ENCODE measurements at regions of chr1 and their contacts with region 1.

Region 1: GRCh38 chr1:9004700-9005394 is 21.4 kb downstream of the SLC2A7 start:
- DNase-seq: no peak
- ATAC-seq: peak; percentile 73
- H3K4me3 ChIP-seq: no peak overlapping the region
- H3K27ac ChIP-seq: no peak overlapping the region
- H3K4me1 ChIP-seq: peaks cover 22% of the 10 kb centered on the region
- H3K27me3 ChIP-seq: no peaks in the 10 kb centered on the region
- CTCF ChIP-seq: peak; percentile 89 to 97 (median 97)
- EP300 ChIP-seq: no peak
- POLR2A ChIP-seq: no peak
- RAD21 ChIP-seq: peak; percentile 82

Region 2: GRCh38 chr1:8817406-8818324 is 187.2 kb before region 1 on chr1 and contains the start of gene RERE:
- CTCF ChIA-PET with region 1: no interaction called
- POLR2A ChIA-PET with region 1: no interaction called
- RAD21 ChIA-PET with region 1: no interaction called
- SMC1A ChIA-PET with region 1: no interaction called
- in situ Hi-C with region 1: no loop called
- intact Hi-C with region 1: no loop called
- DNase-seq: peak; percentile 74
- ATAC-seq: peak; percentile 92
- H3K4me3 ChIP-seq: peak within 1 kb of the TSS; percentile 91
- H3K27ac ChIP-seq: peak within 1 kb of the TSS; percentile 95
- H3K4me1 ChIP-seq: no peaks in the 10 kb centered on the region
- H3K27me3 ChIP-seq: no peaks in the 10 kb centered on the region
- CTCF ChIP-seq: 0 out of 6 replicates have a peak, but pooled peaks of 1 of the 3 experiments have one; percentile 0
- EP300 ChIP-seq: no peak
- POLR2A ChIP-seq: peak; percentile 92
- RAD21 ChIP-seq: no peak
- polyA plus RNA-seq, gene RERE: 5.2 to 5.9 TPM

Region 3: GRCh38 chr1:8910914-8911313 is 93.9 kb before region 1 on chr1:
- CTCF ChIA-PET with region 1: interaction called, 22 read pairs
- POLR2A ChIA-PET with region 1: interaction called, 3 read pairs
- RAD21 ChIA-PET with region 1: interaction called, 4 read pairs
- SMC1A ChIA-PET with region 1: interaction called, 10 read pairs
- in situ Hi-C with region 1: no loop called
- intact Hi-C with region 1: loop called (anchors 5 kb)
- DNase-seq: no peak
- ATAC-seq: no peak
- H3K4me3 ChIP-seq: no peak overlapping the region
- H3K27ac ChIP-seq: no peak overlapping the region
- H3K4me1 ChIP-seq: no peaks in the 10 kb centered on the region
- H3K27me3 ChIP-seq: peaks cover 0 to 3% of the 10 kb centered on the region in 2 experiments; a peak in 3 of 4 replicates
- CTCF ChIP-seq: no peak
- EP300 ChIP-seq: no peak
- POLR2A ChIP-seq: no peak
- RAD21 ChIP-seq: no peak

Region 4: DNA sequence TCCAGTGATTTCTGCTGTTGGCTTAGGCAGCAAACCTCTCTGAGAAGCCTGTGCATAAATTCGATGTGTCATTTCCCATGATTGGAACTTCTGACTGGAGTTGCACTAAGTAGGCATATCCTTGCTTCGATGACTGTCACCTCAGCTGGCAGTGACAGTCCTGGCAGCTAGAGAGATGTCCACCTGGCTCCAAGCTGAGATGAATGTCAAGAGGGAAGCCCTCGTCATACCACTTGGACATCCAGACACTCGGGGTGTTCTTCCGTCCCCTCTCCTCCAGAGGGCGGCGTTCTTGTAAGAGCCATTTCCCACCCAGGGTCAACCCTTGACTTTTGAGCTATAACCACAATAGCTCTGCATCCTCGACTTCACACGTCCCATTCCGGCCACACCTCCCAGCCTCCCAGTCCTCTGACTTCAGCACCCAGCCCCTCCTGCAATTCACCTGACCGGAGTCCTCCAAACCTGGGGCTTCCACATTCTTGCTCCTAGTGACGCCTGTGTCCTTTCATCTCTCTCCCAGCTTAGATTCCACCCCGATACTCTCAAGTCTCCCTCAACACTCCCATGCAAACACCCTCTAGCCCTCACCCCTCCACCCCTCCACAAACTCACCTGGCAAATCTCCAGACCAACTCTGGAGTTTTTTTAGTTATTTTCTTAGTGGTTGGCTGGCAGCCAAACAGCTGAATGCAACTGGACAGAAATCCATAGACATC is 41.9 kb before region 1 on chr1:
- CTCF ChIA-PET with region 1: interaction called, 20 read pairs
- POLR2A ChIA-PET with region 1: no interaction called
- RAD21 ChIA-PET with region 1: interaction called, 17 read pairs
- SMC1A ChIA-PET with region 1: interaction called, 7 read pairs
- in situ Hi-C with region 1: no loop called
- intact Hi-C with region 1: no loop called
- DNase-seq: no peak
- ATAC-seq: peak; percentile 90
- H3K4me3 ChIP-seq: no peak overlapping the region
- H3K27ac ChIP-seq: no peak overlapping the region
- H3K4me1 ChIP-seq: no peaks in the 10 kb centered on the region; the same call in 1 of the 2 replicates
- H3K27me3 ChIP-seq: no peaks in the 10 kb centered on the region; a peak in 1 of 4 replicates
- CTCF ChIP-seq: peak; percentile 59 to 79 (median 66)
- EP300 ChIP-seq: no peak
- POLR2A ChIP-seq: no peak
- RAD21 ChIP-seq: peak; percentile 44

Region 5: GRCh38 chr1:8992936-8993687 is 11.7 kb before region 1 on chr1:
- CTCF ChIA-PET with region 1: interaction called, 37 read pairs
- POLR2A ChIA-PET with region 1: no interaction called
- RAD21 ChIA-PET with region 1: interaction called, 10 read pairs
- SMC1A ChIA-PET with region 1: interaction called, 17 read pairs
- in situ Hi-C with region 1: no loop called
- intact Hi-C with region 1: no loop called
- DNase-seq: no peak
- ATAC-seq: no peak
- H3K4me3 ChIP-seq: no peak overlapping the region
- H3K27ac ChIP-seq: no peak overlapping the region
- H3K4me1 ChIP-seq: no peaks in the 10 kb centered on the region
- H3K27me3 ChIP-seq: no peaks in the 10 kb centered on the region
- CTCF ChIP-seq: 0 out of 6 replicates have a peak, but pooled peaks of 1 of the 3 experiments have one; percentile 5
- EP300 ChIP-seq: no peak
- POLR2A ChIP-seq: no peak
- RAD21 ChIP-seq: no peak

Region 6: DNA sequence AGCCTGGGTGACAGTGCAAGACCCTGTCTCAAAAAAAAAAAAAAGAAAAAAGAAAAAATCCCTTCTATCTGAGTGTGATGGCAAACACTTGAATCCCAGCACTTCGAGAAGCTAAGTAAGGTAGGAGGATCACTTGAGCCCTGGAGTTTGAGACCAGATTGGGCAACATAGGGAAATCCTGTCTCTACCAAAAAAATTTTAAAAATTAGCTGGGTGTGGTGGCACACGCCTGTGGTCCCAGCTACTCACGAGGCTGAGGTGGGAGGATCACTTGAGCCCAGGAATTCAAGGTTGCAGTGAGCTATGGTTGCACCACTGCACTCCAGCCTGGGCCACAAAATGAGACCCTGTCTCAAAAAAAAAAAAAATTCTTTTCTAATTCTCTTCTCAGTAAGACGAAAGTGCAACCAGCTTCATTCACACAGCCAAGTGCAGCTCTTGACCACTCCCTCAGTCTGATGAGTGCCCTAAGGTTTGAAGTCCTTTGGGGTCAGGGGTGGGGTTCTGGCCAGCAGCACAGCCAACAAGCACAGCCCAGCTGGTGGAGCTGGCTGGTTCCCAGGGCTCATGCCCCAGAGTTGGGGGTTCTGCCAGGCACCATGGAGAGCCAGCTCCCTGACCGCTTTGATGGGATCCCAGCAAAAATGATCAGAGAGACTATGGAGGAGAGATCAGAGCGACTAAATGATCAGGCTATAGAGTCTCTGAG is 56.6 kb after region 1 on chr1:
- CTCF ChIA-PET with region 1: interaction called, 14 read pairs
- POLR2A ChIA-PET with region 1: interaction called, 4 read pairs
- RAD21 ChIA-PET with region 1: interaction called, 7 read pairs
- SMC1A ChIA-PET with region 1: interaction called, 8 read pairs
- in situ Hi-C with region 1: no loop called
- intact Hi-C with region 1: no loop called
- DNase-seq: no peak
- ATAC-seq: peak; percentile 64
- H3K4me3 ChIP-seq: no peak overlapping the region
- H3K27ac ChIP-seq: peak overlapping the region; percentile 2; the same call in 1 of the 2 replicates
- H3K4me1 ChIP-seq: peaks cover 24% of the 10 kb centered on the region
- H3K27me3 ChIP-seq: no peaks in the 10 kb centered on the region
- CTCF ChIP-seq: no peak
- EP300 ChIP-seq: no peak
- POLR2A ChIP-seq: no peak
- RAD21 ChIP-seq: no peak

Region 7: GRCh38 chr1:9078015-9078750 is 73.3 kb after region 1 on chr1:
- CTCF ChIA-PET with region 1: interaction called, 16 read pairs
- POLR2A ChIA-PET with region 1: interaction called, 3 read pairs
- RAD21 ChIA-PET with region 1: interaction called, 10 read pairs
- SMC1A ChIA-PET with region 1: interaction called, 11 read pairs
- in situ Hi-C with region 1: no loop called
- intact Hi-C with region 1: loop called (anchors 2 kb)
- DNase-seq: peak; percentile 95
- ATAC-seq: peak; percentile 49
- H3K4me3 ChIP-seq: no peak overlapping the region
- H3K27ac ChIP-seq: peak overlapping the region; percentile 45
- H3K4me1 ChIP-seq: peaks cover 55% of the 10 kb centered on the region
- H3K27me3 ChIP-seq: no peaks in the 10 kb centered on the region
- CTCF ChIP-seq: no peak
- EP300 ChIP-seq: peak; percentile 83 to 94; a peak in 3 of 4 replicates
- POLR2A ChIP-seq: no peak
- RAD21 ChIP-seq: no peak

Region 8: GRCh38 chr1:9196129-9197040 is 191.5 kb after region 1 on chr1:
- CTCF ChIA-PET with region 1: interaction called, 11 read pairs
- POLR2A ChIA-PET with region 1: no interaction called
- RAD21 ChIA-PET with region 1: interaction called, 3 read pairs
- SMC1A ChIA-PET with region 1: interaction called, 4 read pairs
- in situ Hi-C with region 1: no loop called
- intact Hi-C with region 1: loop called (anchors 5 kb)
- DNase-seq: peak; percentile 67
- ATAC-seq: peak; percentile 74
- H3K4me3 ChIP-seq: peak overlapping the region; percentile 5; the same call in 1 of the 2 replicates
- H3K27ac ChIP-seq: peak overlapping the region; percentile 51
- H3K4me1 ChIP-seq: peaks cover 52% of the 10 kb centered on the region
- H3K27me3 ChIP-seq: peaks cover 0 to 21% of the 10 kb centered on the region in 2 experiments; a peak in 3 of 4 replicates
- CTCF ChIP-seq: peak; percentile 81 to 97 (median 86); a peak in 5 of 6 replicates
- EP300 ChIP-seq: peak in 1 of 2 experiments; percentile 61; a peak in 1 of 4 replicates
- POLR2A ChIP-seq: no peak
- RAD21 ChIP-seq: peak; percentile 96

Measured in GM12878 (cell line).